T-cell (primary cell): ENCODE measurements at regions of chr17 and their contacts with region 1.

Region 1: GRCh38 chr17:47711366-47712099 is 17.6 kb downstream of the TBKBP1 start:
- DNase-seq: no peak
- ATAC-seq: no peak
- H3K4me3 ChIP-seq: no peak overlapping the region
- H3K4me3 Mint-ChIP-seq: no peak overlapping the region
- H3K27ac ChIP-seq: no peak overlapping the region
- H3K27ac Mint-ChIP-seq: no peak overlapping the region
- H3K4me1 ChIP-seq: peaks cover 15 to 82% of the 10 kb centered on the region in 2 experiments
- H3K4me1 Mint-ChIP-seq: peaks cover 19 to 62% (median 44%) of the 10 kb centered on the region in 3 donors
- H3K27me3 ChIP-seq: peaks cover 0 to 6% of the 10 kb centered on the region in 2 experiments
- H3K27me3 Mint-ChIP-seq: no peaks in the 10 kb centered on the region

Region 2: DNA sequence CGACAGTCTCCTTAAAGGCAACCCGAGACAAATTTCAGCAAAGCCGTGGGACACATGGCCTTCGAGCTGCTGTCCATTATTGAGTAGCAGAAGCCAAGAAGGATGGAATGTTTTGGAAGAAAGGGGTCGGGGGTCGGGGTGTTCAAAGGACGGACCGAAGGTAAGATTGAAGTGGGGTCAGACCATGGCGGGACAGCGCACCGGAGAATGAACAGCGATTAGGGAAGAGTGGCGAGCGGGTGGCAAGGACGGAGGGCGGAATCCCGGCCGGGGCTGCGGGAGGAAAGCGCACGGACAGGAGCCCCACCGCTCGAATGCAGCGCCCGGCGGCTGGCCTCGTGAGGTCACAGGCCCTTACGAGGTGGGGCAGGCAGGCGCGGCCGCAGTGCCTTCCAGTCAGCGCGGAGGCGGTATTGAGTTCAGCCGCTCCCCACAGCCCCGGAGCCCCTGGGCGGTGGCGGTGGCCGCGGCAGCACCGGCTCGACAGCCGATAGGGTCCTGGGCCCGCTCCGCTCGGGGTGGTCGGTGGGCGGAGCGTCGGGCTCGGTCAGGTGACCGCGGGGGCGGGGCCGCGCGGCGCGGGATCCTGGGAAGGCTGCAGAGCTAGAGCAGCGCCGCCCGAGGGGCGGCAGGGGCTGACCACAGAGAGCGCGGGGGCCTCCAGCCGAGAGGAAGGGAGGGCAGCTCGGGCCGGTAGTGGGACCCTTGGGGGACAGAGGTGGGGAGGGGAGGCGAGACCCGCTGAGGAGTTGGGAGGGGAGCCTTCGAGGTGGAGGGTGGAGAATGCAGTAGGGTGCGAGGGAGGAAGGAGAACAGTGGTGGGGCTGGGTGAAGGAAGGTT is 387.9 kb before region 1 on chr17 and contains the start of gene EFCAB13:
- CTCF ChIA-PET with region 1: no interaction called
- POLR2A ChIA-PET with region 1: no interaction called
- DNase-seq: peak; percentile 48 to 87 (median 68)
- ATAC-seq: peak; percentile 84 to 88 (median 86)
- H3K4me3 ChIP-seq: peak within 1 kb of the TSS; percentile 82 to 94
- H3K4me3 Mint-ChIP-seq: peak within 1 kb of the TSS; percentile 95 to 99 (median 96)
- H3K27ac ChIP-seq: peak within 1 kb of the TSS; percentile 78
- H3K27ac Mint-ChIP-seq: peak within 1 kb of the TSS; percentile 93 to 96
- H3K4me1 ChIP-seq: peaks cover 3 to 16% of the 10 kb centered on the region in 2 experiments
- H3K4me1 Mint-ChIP-seq: peaks cover 13 to 23% (median 21%) of the 10 kb centered on the region in 3 donors
- H3K27me3 ChIP-seq: no peaks in the 10 kb centered on the region
- H3K27me3 Mint-ChIP-seq: no peaks in the 10 kb centered on the region
- total RNA-seq, gene EFCAB13: 13.4 to 19.1 (median 15.2) TPM

Region 3: GRCh38 chr17:47757386-47757785 is 45.9 kb after region 1 on chr17:
- CTCF ChIA-PET with region 1: no interaction called
- POLR2A ChIA-PET with region 1: no interaction called
- DNase-seq: no peak
- ATAC-seq: no peak
- H3K4me3 ChIP-seq: no peak overlapping the region
- H3K4me3 Mint-ChIP-seq: no peak overlapping the region
- H3K27ac ChIP-seq: no peak overlapping the region
- H3K27ac Mint-ChIP-seq: no peak overlapping the region
- H3K4me1 ChIP-seq: peaks cover 0 to 1% of the 10 kb centered on the region in 2 experiments
- H3K4me1 Mint-ChIP-seq: no peaks in the 10 kb centered on the region
- H3K27me3 ChIP-seq: no peaks in the 10 kb centered on the region
- H3K27me3 Mint-ChIP-seq: peaks cover 6 to 16% of the 10 kb centered on the region in 2 donors

Region 4: GRCh38 chr17:47852093-47852949 is 140.8 kb after region 1 on chr17:
- CTCF ChIA-PET with region 1: interaction called in 1 of 2 experiments, 11 read pairs
- POLR2A ChIA-PET with region 1: no interaction called
- DNase-seq: no peak
- ATAC-seq: no peak
- H3K4me3 ChIP-seq: peak overlapping the region in 1 of 2 donors; percentile 17
- H3K4me3 Mint-ChIP-seq: peak overlapping the region in 2 of 3 donors; percentile 17 to 73
- H3K27ac ChIP-seq: no peak overlapping the region
- H3K27ac Mint-ChIP-seq: peak overlapping the region in 1 of 2 donors; percentile 8
- H3K4me1 ChIP-seq: peaks cover 4 to 35% of the 10 kb centered on the region in 2 experiments
- H3K4me1 Mint-ChIP-seq: peaks cover 16 to 33% (median 31%) of the 10 kb centered on the region in 3 donors
- H3K27me3 ChIP-seq: peaks cover 16 to 78% of the 10 kb centered on the region in 2 experiments
- H3K27me3 Mint-ChIP-seq: peaks cover 59 to 82% of the 10 kb centered on the region in 2 donors